Posterior vena cava (tissue), 2 donors: ENCODE measurements at regions of chr2 and their contacts with region 1.

Region 1: GRCh38 chr2:197057959-197058358 is 131.5 kb upstream of the PGAP1 start:
- DNase-seq: no peak

Region 2: GRCh38 chr2:197113275-197113711 is 55.3 kb after region 1 on chr2:
- intact Hi-C with region 1: no loop called
- DNase-seq: no peak

Region 3: DNA sequence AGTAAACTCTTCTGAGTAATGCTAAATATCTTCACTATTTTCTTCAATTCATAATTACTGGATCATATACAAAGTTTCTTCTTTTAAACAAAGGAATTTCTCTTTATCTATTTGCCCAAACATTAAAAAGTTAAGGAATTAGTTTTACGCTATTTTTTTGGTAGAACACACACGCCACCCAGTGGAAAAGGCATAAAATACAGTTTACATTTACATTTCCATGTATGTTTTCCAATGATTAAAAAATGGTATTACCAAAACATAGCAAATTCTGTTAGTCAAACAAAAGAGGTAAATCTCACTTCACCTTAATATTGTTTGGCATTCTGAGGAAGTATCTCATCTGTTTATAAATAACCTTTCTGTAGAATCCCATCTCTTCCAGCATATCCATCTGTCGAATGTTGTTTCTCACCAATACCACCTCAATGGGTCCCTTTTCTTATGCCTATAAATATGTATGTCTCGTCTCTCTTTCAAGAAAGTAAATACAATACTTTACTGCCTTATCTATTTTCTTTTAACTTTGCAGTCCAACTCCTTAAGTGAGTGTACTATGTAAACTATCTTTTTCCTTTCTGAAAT is 720.0 kb after region 1 on chr2:
- intact Hi-C with region 1: loop called in 1 of 2 experiments (anchors 5 kb)
- DNase-seq: no peak